SK-N-SH (cell line): ENCODE measurements at regions of chr16 and their contacts with region 1.

Region 1: GRCh38 chr16:73058221-73058615 is 10.3 kb upstream of the ZFHX3 start:
- DNase-seq: peak; percentile 72
- H3K4me3 ChIP-seq: peak overlapping the region; percentile 69 to 84
- H3K27ac ChIP-seq: peak overlapping the region; percentile 74 to 75; a peak in 3 of 4 replicates
- H3K4me1 ChIP-seq: peaks cover 14 to 52% of the 10 kb centered on the region in 2 experiments
- H3K27me3 ChIP-seq: no peaks in the 10 kb centered on the region
- CTCF ChIP-seq: no peak
- EP300 ChIP-seq: no peak
- RAD21 ChIP-seq: no peak

Region 2: DNA sequence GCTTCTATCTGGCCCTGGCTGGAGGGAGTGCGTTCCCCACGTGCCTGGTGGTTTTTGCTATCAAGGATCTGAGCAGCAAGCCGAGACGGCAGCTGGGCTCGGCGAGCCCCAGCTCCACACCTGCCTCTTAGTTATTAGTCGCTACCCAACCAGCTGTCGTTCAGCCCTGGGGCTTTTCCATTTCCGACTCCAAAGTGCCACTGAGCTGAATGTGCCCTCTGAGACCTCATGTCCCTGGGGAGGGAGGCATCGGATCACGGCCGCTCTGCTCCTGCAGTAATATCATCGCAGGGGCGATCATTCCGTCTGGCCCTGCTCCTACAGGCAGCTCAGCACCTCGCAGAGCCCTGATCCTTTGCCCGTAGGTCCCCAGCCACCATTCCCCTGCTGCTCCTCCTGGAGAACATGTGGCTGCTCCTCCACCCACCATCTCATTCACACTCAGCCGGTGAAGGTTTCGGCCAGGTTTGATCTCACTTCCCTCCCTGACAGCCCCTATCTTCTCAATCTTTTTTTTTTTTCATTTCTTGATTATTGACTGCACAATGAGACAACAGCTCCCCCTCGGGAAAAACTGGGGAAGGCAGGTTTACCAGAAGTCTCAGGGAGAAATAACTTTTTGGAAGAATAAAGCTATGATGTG is 97.0 kb before region 1 on chr16:
- CTCF ChIA-PET with region 1: interaction called, 17 read pairs
- POLR2A ChIA-PET with region 1: no interaction called
- DNase-seq: peak; percentile 83
- H3K4me3 ChIP-seq: peak overlapping the region in 1 of 2 experiments; percentile 7; a peak in 1 of 4 replicates
- H3K27ac ChIP-seq: peak overlapping the region in 1 of 2 experiments; percentile 78; a peak in 2 of 4 replicates
- H3K4me1 ChIP-seq: peaks cover 8 to 38% of the 10 kb centered on the region in 2 experiments
- H3K27me3 ChIP-seq: no peaks in the 10 kb centered on the region
- CTCF ChIP-seq: peak; percentile 55
- EP300 ChIP-seq: peak in 1 of 2 experiments; percentile 24; a peak in 1 of 4 replicates
- RAD21 ChIP-seq: peak; percentile 63

Region 3: DNA sequence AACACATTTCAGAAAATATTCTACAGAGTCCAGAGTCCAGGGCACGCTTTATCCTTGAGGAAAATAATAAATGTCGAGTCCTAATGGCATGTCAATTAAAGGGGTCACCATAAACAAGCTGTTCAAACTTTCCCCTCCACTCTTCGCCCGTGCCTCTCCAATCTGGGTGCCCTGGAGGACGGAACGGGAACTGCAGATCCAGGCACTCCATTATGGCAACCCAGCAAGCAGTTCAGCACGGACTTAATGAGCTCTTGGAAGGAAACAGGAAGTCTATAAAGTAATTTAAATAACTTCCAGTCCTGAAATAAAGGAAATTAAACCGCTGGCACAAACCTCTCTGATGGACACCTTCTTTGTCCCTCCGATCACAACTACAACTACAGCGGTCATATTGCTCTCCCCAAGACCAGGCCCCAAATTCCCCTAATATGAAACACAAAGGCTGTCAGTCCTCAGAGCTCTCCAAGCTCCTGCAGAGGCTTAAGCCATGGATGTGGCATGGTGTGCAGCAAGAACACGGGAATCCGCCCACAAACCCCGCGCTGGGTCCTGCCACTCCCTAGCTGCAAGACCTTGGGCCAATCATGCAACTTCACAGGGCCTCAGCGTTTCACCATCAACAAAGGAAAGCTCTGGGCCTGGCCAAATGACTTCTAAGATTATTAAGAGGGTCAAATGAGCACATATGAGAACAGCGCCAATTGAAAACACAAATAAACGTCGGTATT is 62.9 kb before region 1 on chr16:
- CTCF ChIA-PET with region 1: no interaction called
- POLR2A ChIA-PET with region 1: no interaction called
- DNase-seq: peak; percentile 34
- H3K4me3 ChIP-seq: no peak overlapping the region
- H3K27ac ChIP-seq: no peak overlapping the region
- H3K4me1 ChIP-seq: peaks cover 23 to 29% of the 10 kb centered on the region in 2 experiments; a peak in 3 of 4 replicates
- H3K27me3 ChIP-seq: no peaks in the 10 kb centered on the region
- CTCF ChIP-seq: peak; percentile 51
- EP300 ChIP-seq: no peak
- RAD21 ChIP-seq: no peak

Region 4: DNA sequence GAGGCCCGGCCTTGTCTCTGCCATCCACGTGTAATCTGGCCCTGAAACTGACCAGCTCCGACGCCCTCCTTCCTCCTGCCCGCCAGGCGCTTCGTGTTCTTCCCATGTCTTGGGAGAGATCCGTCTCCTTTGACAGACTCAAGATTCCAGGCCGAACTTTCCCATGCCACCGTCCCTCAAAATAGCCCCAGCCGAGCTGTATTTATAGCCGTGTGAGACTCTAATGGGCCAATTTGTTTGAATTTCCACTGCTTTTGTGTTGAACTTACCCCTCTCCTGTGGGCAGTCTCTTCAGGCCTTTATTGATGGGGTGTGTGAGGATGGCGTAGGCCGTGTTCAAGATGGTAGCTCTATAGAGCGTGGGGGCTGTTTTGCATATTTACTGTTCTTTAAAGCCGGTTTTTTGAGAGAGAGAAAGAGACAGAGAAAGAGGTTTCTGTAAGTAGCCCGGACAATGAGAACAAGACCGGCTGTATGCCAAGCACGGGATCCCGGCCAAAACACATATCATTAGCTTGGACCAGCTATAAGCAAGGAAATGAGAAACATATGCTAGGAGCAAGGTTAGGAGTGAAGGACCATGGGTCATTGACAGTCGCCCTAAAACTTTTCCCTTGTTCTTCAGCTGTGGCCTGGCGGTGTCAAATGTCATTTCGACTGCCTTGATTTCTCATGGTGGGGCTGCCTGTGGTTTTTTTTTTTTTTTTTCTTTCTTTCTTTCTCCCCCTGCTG is 114.2 kb after region 1 on chr16:
- CTCF ChIA-PET with region 1: interaction called, 5 read pairs
- POLR2A ChIA-PET with region 1: interaction called, 16 read pairs
- DNase-seq: peak; percentile 80
- H3K4me3 ChIP-seq: no peak overlapping the region
- H3K27ac ChIP-seq: peak overlapping the region; percentile 95 to 100
- H3K4me1 ChIP-seq: peaks cover 21 to 40% of the 10 kb centered on the region in 2 experiments
- H3K27me3 ChIP-seq: no peaks in the 10 kb centered on the region
- CTCF ChIP-seq: peak; percentile 53
- EP300 ChIP-seq: peak; percentile 70 to 85; a peak in 3 of 4 replicates
- RAD21 ChIP-seq: no peak; the same call in none of the 2 replicates